Cardiac septum (tissue), 1 donor: ENCODE measurements at regions of chr3 and their contacts with region 1.

Region 1: DNA sequence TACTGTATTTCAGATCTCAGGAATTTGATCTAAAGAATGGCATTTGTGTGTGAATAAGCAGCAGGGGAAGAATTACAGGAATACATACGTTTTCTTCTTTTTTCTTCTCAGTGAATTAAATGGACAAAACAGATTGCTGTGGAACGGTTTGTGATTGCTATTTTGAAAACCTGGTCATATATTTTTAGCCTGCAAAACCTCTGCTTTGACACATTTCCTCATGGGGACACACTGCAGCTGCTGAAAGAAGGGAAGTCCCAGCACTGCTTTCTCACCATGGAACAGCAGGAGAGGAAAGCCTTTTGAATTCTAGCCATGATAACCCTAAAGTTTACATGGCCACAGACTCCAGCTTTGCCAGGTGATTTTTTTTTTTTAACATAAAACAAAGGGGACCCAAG is 315.0 kb downstream of the OXSM start:
- DNase-seq: no peak

Region 2: DNA sequence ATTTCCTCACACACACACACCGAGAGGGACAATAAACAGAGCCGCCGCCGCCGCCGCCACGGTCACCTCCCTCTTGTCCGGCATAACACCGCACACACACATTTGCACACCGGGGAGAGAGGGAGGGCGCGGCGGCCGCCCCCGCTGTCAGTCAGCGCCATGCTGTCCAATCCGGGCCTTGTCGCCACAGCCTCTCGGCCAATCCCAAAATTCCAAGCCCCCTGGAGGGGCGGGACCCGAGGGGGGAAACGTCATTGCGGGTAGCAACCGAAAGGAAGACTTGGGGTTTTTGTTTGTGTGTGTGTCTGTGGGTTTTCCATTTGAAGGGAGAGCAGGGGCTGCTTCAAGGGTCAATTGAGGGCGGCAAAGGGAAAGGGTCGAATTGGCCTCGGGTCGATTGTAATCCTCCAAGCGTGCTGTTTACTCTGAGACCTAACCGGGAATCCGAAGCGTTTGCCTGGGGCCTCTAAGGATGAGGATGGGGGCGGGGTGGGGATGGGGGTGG is 440.0 kb before region 1 on chr3 and contains the start of gene TOP2B:
- intact Hi-C with region 1: loop called (anchors 10 kb)
- DNase-seq: peak; percentile 98
- total RNA-seq, gene TOP2B: 108 TPM

Region 3: DNA sequence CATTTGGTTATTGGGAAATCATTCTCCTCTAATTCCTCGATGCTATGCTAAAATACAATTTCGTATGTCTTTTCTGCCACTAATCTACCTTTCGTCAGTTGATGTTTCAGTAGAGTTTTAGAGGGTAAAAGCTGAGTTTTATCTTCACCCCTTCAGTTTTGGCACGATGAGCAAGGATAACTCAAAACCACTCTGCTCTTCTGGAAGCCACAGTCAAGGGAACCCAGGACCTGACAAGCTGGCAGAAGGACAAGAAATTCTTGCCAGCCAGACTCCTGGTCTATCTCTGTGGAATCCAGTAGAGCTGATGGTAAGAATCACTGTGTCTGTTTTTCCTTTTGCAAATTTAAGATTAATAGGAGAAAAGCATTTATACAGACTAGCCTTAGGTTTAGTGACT is 103.3 kb after region 1 on chr3:
- intact Hi-C with region 1: no loop called
- DNase-seq: no peak

Region 4: GRCh38 chr3:26236526-26236925 is 131.7 kb after region 1 on chr3:
- intact Hi-C with region 1: loop called (anchors 2 kb)
- DNase-seq: no peak

Region 5: DNA sequence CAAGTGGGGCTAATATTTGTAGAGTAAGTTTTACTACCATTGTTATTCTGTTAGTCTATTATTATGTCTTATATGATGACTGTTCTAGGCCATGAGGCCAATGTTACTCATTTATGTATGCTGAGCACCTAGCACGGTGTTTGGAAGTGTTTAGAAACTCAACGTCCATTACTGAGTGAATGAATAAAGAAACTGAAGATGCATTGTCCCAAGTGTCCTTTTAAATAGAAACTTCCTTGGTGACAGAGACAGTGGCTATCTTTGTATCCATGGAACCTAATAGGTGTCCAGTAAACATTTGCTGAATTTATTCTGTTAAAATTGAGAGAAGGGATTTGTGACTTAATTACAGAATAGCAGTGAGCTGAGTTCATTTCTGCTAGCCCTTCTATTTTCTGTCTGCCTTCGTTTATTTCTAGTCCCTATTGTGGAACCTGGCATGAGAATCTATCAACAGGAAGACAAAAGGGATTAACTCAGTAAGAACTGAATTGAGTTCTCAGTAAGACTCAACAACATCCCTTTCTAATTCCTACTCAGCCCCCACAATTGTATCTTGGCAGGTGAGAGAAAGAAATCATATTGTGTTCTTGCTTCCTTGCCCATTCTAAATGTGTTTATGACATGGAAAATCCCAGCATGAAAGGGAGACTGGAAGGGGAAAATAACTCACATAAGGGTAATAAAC is 271.1 kb after region 1 on chr3:
- intact Hi-C with region 1: no loop called
- DNase-seq: no peak